H1 (cell line): ENCODE measurements at regions of chr2 and their contacts with region 1.

Region 1: GRCh38 chr2:96801005-96801785 is 14.9 kb upstream of the CNNM3 start:
- DNase-seq: peak; percentile 56 to 89
- H3K4me3 ChIP-seq: no peak overlapping the region
- H3K27ac ChIP-seq: peak overlapping the region; percentile 68; the same call in 1 of the 2 replicates
- H3K4me1 ChIP-seq: no peaks in the 10 kb centered on the region; a peak in 2 of 7 replicates
- H3K27me3 ChIP-seq: no peaks in the 10 kb centered on the region
- CTCF ChIP-seq: peak; percentile 71 to 100 (median 95)
- EP300 ChIP-seq: no peak
- POLR2A ChIP-seq: no peak
- RAD21 ChIP-seq: peak; percentile 85 to 86

Region 2: GRCh38 chr2:96679848-96680247 is 121.3 kb before region 1 on chr2:
- CTCF ChIA-PET with region 1: no interaction called
- POLR2A ChIA-PET with region 1: no interaction called
- DNase-seq: no peak
- H3K4me3 ChIP-seq: no peak overlapping the region
- H3K27ac ChIP-seq: no peak overlapping the region
- H3K4me1 ChIP-seq: no peaks in the 10 kb centered on the region; a peak in 2 of 7 replicates
- H3K27me3 ChIP-seq: no peaks in the 10 kb centered on the region
- CTCF ChIP-seq: no peak
- EP300 ChIP-seq: no peak
- POLR2A ChIP-seq: no peak
- RAD21 ChIP-seq: no peak; a peak in 1 of 4 replicates

Region 3: DNA sequence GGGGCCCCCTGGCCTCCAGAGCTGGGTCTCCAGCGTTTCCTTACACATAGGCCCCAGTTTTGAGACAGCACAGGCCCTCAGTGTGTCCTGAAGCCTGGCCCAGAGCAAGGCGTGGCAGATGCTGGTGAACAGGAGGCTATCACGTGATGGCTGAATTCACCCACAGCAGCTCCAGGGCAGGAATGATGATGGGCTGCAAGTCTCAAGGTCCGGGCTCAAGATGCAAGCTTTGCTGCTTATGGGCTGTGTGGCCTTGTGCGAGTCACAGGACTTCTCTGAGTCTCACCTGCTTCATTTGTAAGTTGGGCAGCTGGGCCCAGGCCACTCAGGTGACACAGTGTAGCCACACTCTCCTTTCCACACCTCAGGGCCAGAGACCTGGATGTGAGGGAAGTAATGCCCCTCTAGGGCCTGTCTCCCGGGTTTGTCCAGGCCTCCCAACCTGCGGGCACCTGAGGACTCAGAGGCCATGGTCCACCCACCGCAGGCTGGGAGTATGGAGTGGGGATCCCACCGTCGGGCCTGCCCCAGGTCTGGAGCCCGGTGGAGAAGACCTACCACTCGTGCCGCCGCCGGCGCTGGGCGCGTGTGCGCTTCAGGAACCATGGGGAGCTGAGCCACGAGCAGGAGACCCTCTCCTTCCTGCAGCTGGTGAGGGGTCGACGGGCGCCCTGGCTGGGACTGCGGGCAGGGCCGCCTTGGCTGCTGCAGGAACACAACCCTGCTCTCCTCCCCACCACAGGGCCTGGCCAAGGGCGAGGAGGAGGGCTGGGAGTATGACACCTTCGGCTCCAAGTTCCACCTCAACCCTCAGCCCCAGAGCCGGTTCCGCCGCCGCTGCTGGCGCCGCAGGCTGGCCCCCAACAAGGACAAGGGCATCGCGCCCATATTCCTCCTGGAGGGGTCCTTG is 110.2 kb before region 1 on chr2:
- CTCF ChIA-PET with region 1: no interaction called
- POLR2A ChIA-PET with region 1: no interaction called
- DNase-seq: no peak
- H3K4me3 ChIP-seq: no peak overlapping the region
- H3K27ac ChIP-seq: no peak overlapping the region
- H3K4me1 ChIP-seq: no peaks in the 10 kb centered on the region
- H3K27me3 ChIP-seq: no peaks in the 10 kb centered on the region
- CTCF ChIP-seq: no peak
- EP300 ChIP-seq: no peak
- POLR2A ChIP-seq: no peak
- RAD21 ChIP-seq: no peak

Region 4: GRCh38 chr2:96739633-96740428 is 61.4 kb before region 1 on chr2 and contains the start of gene LMAN2L:
- CTCF ChIA-PET with region 1: interaction called, 10 read pairs
- POLR2A ChIA-PET with region 1: no interaction called
- DNase-seq: peak; percentile 85 to 92
- H3K4me3 ChIP-seq: peak within 1 kb of the TSS; percentile 66 to 97 (median 77)
- H3K27ac ChIP-seq: peak within 1 kb of the TSS; percentile 53
- H3K4me1 ChIP-seq: peaks cover 0 to 3% (median 1%) of the 10 kb centered on the region in 4 experiments; a peak in 3 of 7 replicates
- H3K27me3 ChIP-seq: no peaks in the 10 kb centered on the region
- CTCF ChIP-seq: no peak
- EP300 ChIP-seq: no peak
- POLR2A ChIP-seq: peak in 1 of 2 experiments; percentile 79; a peak in 1 of 3 replicates
- RAD21 ChIP-seq: no peak
- total RNA-seq, gene LMAN2L: 14.3 and 15.7 TPM in 2 replicates

Region 5: DNA sequence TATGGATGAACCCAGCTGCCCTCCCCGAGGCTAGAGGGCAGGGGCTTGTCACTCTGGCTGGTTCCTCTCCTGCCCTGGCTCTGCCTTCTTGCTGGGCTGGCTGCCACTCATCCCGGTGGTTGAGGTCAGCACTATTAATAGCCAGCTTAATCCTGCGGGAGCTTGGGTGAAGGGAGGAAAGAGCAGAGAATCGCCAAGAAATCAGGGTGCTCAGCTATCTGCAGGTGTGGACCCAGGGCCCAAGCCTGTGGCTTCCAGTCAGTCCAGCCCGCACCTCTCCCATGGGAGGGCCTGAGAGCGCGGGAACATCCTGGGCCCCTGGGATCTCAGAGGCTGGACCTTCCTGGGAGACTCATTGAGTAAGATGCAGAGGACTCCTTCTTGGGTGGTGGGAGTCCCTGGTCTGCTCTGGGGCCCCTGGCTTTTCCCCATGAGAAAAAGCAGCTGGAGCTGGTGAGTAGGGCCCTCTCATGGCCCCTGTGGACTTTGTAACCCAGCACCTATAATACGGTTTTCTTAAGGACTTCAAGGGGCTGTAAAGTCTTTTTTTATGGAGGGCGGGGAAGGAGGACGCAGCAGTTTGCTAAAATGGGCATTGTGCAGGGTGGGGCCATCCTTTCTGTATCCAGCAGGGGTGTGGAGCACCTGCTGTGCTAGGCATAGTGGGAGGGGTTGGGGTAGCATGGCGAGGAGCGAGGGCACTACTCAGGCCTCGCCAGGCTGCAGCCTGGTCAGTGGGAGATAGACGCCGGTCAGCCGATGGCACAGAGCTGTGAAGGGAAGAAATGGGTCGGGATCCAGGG is 12.6 kb before region 1 on chr2:
- CTCF ChIA-PET with region 1: interaction called, 14 read pairs
- POLR2A ChIA-PET with region 1: no interaction called
- DNase-seq: no peak
- H3K4me3 ChIP-seq: no peak overlapping the region
- H3K27ac ChIP-seq: no peak overlapping the region
- H3K4me1 ChIP-seq: no peaks in the 10 kb centered on the region
- H3K27me3 ChIP-seq: no peaks in the 10 kb centered on the region
- CTCF ChIP-seq: no peak
- EP300 ChIP-seq: no peak
- POLR2A ChIP-seq: no peak
- RAD21 ChIP-seq: no peak

Region 6: GRCh38 chr2:96945012-96945804 is 144.0 kb after region 1 on chr2:
- CTCF ChIA-PET with region 1: no interaction called
- POLR2A ChIA-PET with region 1: no interaction called
- DNase-seq: no peak
- H3K4me3 ChIP-seq: no peak overlapping the region
- H3K27ac ChIP-seq: no peak overlapping the region
- H3K4me1 ChIP-seq: peaks cover 0 to 3% (median 1%) of the 10 kb centered on the region in 4 experiments; a peak in 2 of 7 replicates
- H3K27me3 ChIP-seq: peaks cover 0 to 3% (median under 1%) of the 10 kb centered on the region in 4 experiments; a peak in 3 of 7 replicates
- CTCF ChIP-seq: no peak
- EP300 ChIP-seq: no peak
- POLR2A ChIP-seq: no peak
- RAD21 ChIP-seq: no peak